ENCODE measurements at regions of chr19 and their contacts with region 1.

Region 1: DNA sequence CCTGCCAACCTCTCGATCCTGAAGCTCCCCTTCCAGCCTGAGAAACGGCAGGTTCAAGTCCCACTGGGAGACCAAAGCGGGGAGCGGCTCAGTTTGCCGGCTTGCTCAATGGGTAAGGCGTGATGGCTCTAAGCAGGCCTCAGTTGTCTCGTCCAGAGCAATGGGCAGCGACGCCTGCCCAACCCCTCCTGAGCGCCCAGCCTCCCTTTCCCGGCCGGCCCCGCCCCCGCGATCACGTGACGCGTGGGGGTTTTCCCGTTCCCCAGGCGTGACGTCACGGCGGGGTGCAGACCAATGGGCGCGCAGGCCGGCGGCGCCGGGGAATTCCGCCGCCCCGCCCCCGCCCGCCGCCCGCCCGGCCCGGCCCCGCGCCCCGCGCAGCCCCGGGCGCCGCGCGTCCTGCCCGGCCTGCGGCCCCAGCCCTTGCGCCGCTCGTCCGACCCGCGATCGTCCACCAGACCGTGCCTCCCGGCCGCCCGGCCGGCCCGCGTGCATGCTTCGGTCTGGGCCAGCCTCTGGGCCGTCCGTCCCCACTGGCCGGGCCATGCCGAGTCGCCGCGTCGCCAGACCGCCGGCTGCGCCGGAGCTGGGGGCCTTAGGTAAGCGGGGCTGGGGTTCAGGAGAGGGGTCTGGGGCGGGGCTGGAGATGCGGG is at the start of gene RELB:
- DNase-seq: peak; percentile 73
- ATAC-seq: peak; percentile 74
- H3K4me3 ChIP-seq: peak within 1 kb of the TSS; percentile 72 to 80 (median 79)
- H3K27ac ChIP-seq: peak within 1 kb of the TSS; percentile 92
- H3K4me1 ChIP-seq: peaks cover 20% of the 10 kb centered on the region
- H3K27me3 ChIP-seq: no peaks in the 10 kb centered on the region
- CTCF ChIP-seq: no peak
- EP300 ChIP-seq: 0 out of 4 replicates have a peak, but pooled peaks of 1 of the 2 experiments have one; percentile 8
- POLR2A ChIP-seq: peak in 1 of 2 experiments; percentile 36; a peak in 1 of 4 replicates
- RAD21 ChIP-seq: no peak
- total RNA-seq, gene RELB: 2.8 and 3.5 TPM in 2 replicates

Region 2: DNA sequence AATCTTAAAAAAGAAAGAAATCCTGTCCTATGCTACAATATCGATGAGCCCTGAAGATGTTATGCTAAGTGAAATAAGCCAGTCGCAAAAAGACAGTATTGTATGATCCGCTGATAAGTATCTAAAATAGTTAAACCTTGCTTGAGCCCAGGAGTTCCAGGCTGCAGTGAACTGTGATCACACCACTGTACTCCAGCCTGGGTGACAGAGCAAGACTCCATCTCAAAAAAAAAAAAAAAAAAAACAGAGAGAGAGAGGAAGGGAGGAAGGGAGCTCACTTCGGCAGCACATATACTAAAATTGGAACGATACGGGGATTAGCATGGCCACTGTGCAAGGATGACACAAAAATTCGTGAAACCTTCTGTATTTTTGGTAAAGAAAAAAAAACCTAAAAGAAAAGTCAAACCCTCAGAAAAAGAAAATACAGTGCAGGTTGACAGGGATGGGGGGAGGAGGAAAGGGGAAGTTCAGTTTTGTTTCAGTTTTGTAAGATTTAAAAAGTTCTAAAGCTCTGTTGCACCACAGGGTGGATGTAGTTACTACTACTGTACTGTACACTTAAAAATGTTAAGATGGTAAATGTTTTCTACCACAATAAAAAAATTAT is 46.1 kb after region 1 on chr19:
- CTCF ChIA-PET with region 1: no interaction called
- POLR2A ChIA-PET with region 1: interaction called, 14 read pairs
- in situ Hi-C with region 1: no loop called
- intact Hi-C with region 1: no loop called
- DNase-seq: no peak
- ATAC-seq: no peak
- H3K4me3 ChIP-seq: peak overlapping the region in 1 of 3 experiments; percentile 64; a peak in 1 of 6 replicates
- H3K27ac ChIP-seq: peak overlapping the region; percentile 83
- H3K4me1 ChIP-seq: peaks cover 60% of the 10 kb centered on the region
- H3K27me3 ChIP-seq: no peaks in the 10 kb centered on the region
- CTCF ChIP-seq: no peak
- EP300 ChIP-seq: no peak
- POLR2A ChIP-seq: no peak
- RAD21 ChIP-seq: no peak

Measured in HepG2 (cell line).